ENCODE measurements at regions of chr15 and their contacts with region 1.

Region 1: DNA sequence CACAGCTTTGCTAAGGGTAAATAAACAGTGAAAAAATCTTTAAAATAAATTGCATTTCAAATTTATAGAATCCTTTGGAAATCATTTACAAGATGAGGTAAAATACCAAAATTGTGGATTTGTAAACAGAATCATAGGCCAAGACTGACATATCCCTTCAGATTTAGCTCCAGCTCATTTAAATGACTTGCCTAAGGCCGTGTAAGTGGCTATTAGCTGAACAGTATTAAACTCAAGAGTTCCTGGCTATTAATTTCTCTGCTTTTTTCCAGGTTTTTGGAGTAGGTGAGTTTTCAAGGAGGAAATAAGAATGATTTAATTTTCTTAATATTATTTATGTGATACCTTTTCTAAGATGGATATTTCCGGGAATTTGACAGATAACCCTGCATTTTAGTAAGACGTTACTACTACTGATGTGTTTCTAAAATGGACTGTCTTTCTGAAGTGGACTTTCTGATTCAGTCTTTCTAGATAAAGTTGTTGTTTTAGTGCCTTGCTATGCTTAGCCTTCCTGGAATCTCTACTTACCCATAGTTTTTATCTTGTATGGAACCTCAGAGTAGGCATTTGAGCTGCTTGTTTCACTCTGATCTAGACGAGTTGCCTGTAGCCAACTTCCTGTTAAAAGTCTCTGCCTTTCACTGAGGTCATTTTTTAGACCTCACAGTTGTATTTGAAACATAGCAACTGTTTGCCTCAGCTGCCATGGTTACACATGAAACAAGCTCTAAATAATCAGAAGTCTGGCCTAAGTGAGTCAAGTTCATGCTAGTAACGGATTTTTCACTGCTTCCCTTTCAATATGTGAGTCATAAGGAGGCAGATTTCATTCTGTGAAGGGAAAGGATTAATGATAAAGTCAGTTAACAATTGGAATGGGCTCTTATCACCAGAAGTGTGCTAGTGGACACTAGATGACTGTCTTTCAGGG is 127.0 kb downstream of the KLHL25 start:
- DNase-seq: peak; percentile 73
- H3K4me3 Mint-ChIP-seq: peak overlapping the region; percentile 15
- H3K27ac Mint-ChIP-seq: peak overlapping the region; percentile 93
- H3K4me1 Mint-ChIP-seq: peaks cover 24% of the 10 kb centered on the region
- H3K27me3 Mint-ChIP-seq: no peaks in the 10 kb centered on the region
- CTCF ChIP-seq: no peak

Region 2: GRCh38 chr15:85494048-85494793 is 173.5 kb before region 1 on chr15:
- CTCF ChIA-PET with region 1: no interaction called
- intact Hi-C with region 1: loop called (anchors 5 kb)
- DNase-seq: peak; percentile 59
- H3K4me3 Mint-ChIP-seq: peak overlapping the region; percentile 12
- H3K27ac Mint-ChIP-seq: peak overlapping the region; percentile 78
- H3K4me1 Mint-ChIP-seq: peaks cover 56% of the 10 kb centered on the region
- H3K27me3 Mint-ChIP-seq: no peaks in the 10 kb centered on the region
- CTCF ChIP-seq: no peak

Region 3: GRCh38 chr15:85592148-85592547 is 75.6 kb before region 1 on chr15:
- CTCF ChIA-PET with region 1: interaction called, 4 read pairs
- intact Hi-C with region 1: loop called (anchors 2 kb)
- DNase-seq: peak; percentile 41
- H3K4me3 Mint-ChIP-seq: no peak overlapping the region
- H3K27ac Mint-ChIP-seq: peak overlapping the region; percentile 47
- H3K4me1 Mint-ChIP-seq: peaks cover 61% of the 10 kb centered on the region
- H3K27me3 Mint-ChIP-seq: no peaks in the 10 kb centered on the region
- CTCF ChIP-seq: no peak

Measured in Calu3 (cell line).